IMR-90 (cell line): ENCODE measurements at regions of chr5 and their contacts with region 1.

Region 1: GRCh38 chr5:51731428-51732029 is 348.3 kb downstream of the ISL1 start:
- DNase-seq: no peak
- ATAC-seq: no peak
- H3K4me3 ChIP-seq: no peak overlapping the region
- H3K27ac ChIP-seq: no peak overlapping the region
- H3K4me1 ChIP-seq: no peaks in the 10 kb centered on the region
- H3K27me3 ChIP-seq: no peaks in the 10 kb centered on the region
- CTCF ChIP-seq: no peak
- POLR2A ChIP-seq: no peak
- RAD21 ChIP-seq: no peak

Region 2: DNA sequence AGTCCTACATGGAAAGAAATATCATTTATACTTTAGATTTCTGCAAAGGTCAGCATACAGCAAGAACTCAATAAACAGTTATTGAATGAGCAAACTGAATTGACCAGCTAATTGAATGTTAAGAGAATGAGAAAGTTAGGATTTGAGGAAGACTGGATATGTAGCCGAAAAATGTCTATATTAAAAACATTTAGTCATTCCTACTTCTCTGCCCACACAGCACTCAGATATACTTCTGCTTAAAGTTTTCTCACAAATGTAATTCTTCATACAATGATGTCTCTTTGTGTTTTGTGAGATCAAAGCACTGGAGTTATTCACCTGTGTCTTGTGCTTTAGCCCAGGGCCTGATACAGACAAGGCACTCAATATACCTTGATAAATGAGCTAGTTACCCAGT is 876.5 kb before region 1 on chr5:
- CTCF ChIA-PET with region 1: no interaction called
- POLR2A ChIA-PET with region 1: interaction called, 11 read pairs
- dilution Hi-C with region 1: no loop called
- in situ Hi-C with region 1: no loop called
- intact Hi-C with region 1: no loop called
- DNase-seq: no peak
- ATAC-seq: no peak
- H3K4me3 ChIP-seq: no peak overlapping the region
- H3K27ac ChIP-seq: no peak overlapping the region
- H3K4me1 ChIP-seq: no peaks in the 10 kb centered on the region
- H3K27me3 ChIP-seq: no peaks in the 10 kb centered on the region
- CTCF ChIP-seq: no peak
- POLR2A ChIP-seq: no peak
- RAD21 ChIP-seq: no peak

Region 3: GRCh38 chr5:51684794-51685355 is 46.7 kb before region 1 on chr5:
- CTCF ChIA-PET with region 1: no interaction called
- POLR2A ChIA-PET with region 1: no interaction called
- dilution Hi-C with region 1: no loop called
- in situ Hi-C with region 1: no loop called
- intact Hi-C with region 1: no loop called
- DNase-seq: no peak
- ATAC-seq: no peak
- H3K4me3 ChIP-seq: no peak overlapping the region
- H3K27ac ChIP-seq: no peak overlapping the region
- H3K4me1 ChIP-seq: no peaks in the 10 kb centered on the region
- H3K27me3 ChIP-seq: no peaks in the 10 kb centered on the region
- CTCF ChIP-seq: no peak
- POLR2A ChIP-seq: no peak
- RAD21 ChIP-seq: no peak